Breast epithelium (tissue), 4 donors: ENCODE measurements at regions of chr16 and their contacts with region 1.

Region 1: GRCh38 chr16:26365161-26365940 is 673.6 kb downstream of the HS3ST4 start:
- DNase-seq: no peak
- H3K4me3 ChIP-seq: no peak overlapping the region
- H3K27ac ChIP-seq: no peak overlapping the region
- H3K4me1 ChIP-seq: no peaks in the 10 kb centered on the region
- H3K27me3 ChIP-seq: peaks cover 0 to 4% of the 10 kb centered on the region in 2 donors
- CTCF ChIP-seq: no peak
- POLR2A ChIP-seq: no peak

Region 2: GRCh38 chr16:26295625-26296304 is 69.6 kb before region 1 on chr16:
- intact Hi-C with region 1: loop called (anchors 2 kb)
- DNase-seq: no peak
- H3K4me3 ChIP-seq: no peak overlapping the region
- H3K27ac ChIP-seq: no peak overlapping the region
- H3K4me1 ChIP-seq: no peaks in the 10 kb centered on the region
- H3K27me3 ChIP-seq: no peaks in the 10 kb centered on the region
- CTCF ChIP-seq: no peak
- POLR2A ChIP-seq: no peak

Region 3: GRCh38 chr16:26325451-26325850 is 39.9 kb before region 1 on chr16:
- intact Hi-C with region 1: no loop called
- DNase-seq: no peak
- H3K4me3 ChIP-seq: no peak overlapping the region
- H3K27ac ChIP-seq: no peak overlapping the region
- H3K4me1 ChIP-seq: no peaks in the 10 kb centered on the region
- H3K27me3 ChIP-seq: no peaks in the 10 kb centered on the region
- CTCF ChIP-seq: no peak
- POLR2A ChIP-seq: no peak